CD4-positive, alpha-beta T cell (primary cell): ENCODE measurements at regions of chr1 and their contacts with region 1.

Region 1: DNA sequence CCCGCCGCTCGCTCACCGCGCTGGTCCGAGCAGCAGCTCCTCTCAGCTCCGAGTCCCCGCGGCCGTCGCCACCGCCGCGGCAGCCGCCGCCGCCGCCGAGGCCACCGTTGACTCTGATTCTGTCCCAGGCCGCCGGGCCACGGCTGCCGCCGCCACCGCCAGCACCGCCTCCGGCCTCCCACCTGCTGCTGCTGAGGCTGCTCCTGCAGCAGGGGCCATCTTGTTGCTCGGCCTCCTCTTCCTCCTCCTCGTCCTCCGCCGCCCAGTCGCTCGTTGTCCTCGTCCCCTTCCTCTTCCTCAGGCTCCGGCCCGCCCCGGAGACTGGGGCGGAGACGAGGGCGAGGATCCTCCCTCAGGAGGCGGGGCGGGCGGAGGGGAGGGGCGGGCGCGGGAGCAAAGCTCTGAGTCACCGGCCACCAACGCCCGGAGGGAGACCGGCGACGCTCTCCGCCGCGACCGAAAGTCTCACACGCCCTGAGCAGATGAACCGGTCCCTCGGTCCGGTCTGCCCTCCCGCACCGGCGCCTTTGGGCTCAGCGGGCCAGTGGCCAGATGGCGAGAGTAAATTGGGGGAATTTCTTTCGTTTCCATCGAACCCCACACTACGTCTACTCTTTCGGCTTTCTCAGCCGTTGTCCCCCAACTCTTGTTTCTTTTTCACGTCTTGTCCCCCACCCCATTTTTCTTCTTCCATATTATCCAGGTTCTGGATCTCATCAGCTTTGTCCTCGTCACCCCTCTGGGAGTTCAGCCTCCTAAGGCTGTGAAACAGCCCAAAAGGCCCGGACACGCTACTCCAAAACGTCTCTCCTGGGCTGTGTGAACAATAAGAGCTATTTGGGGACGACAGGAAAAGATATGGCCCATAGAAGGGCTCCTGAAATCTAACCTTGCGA is at the start of gene RC3H1:
- DNase-seq: peak; percentile 80 to 94 (median 88)
- ATAC-seq: peak; percentile 91
- H3K4me3 ChIP-seq: peak within 1 kb of the TSS; percentile 97
- H3K4me3 Mint-ChIP-seq: peak within 1 kb of the TSS; percentile 99
- H3K27ac ChIP-seq: peak within 1 kb of the TSS; percentile 85 to 90
- H3K27ac Mint-ChIP-seq: peak within 1 kb of the TSS; percentile 91
- H3K4me1 ChIP-seq: peaks cover 27% of the 10 kb centered on the region
- H3K4me1 Mint-ChIP-seq: peaks cover 55% of the 10 kb centered on the region
- H3K27me3 ChIP-seq: no peaks in the 10 kb centered on the region
- H3K27me3 Mint-ChIP-seq: no peaks in the 10 kb centered on the region
- CTCF ChIP-seq: no peak
- total RNA-seq, gene RC3H1: 38.0 to 40.4 TPM

Region 2: GRCh38 chr1:173714759-173715537 is 307.4 kb before region 1 on chr1 and contains the start of gene KLHL20:
- CTCF ChIA-PET with region 1: no interaction called
- POLR2A ChIA-PET with region 1: interaction called, 3 read pairs
- intact Hi-C with region 1: loop called in 1 of 2 experiments (anchors 10 kb)
- DNase-seq: peak; percentile 70 to 94 (median 81)
- ATAC-seq: peak; percentile 97
- H3K4me3 ChIP-seq: peak within 1 kb of the TSS; percentile 63
- H3K4me3 Mint-ChIP-seq: peak within 1 kb of the TSS; percentile 97
- H3K27ac ChIP-seq: peak within 1 kb of the TSS; percentile 73 to 81
- H3K27ac Mint-ChIP-seq: peak within 1 kb of the TSS; percentile 91
- H3K4me1 ChIP-seq: peaks cover 8% of the 10 kb centered on the region
- H3K4me1 Mint-ChIP-seq: peaks cover 36% of the 10 kb centered on the region
- H3K27me3 ChIP-seq: peaks cover 4 to 19% of the 10 kb centered on the region in 2 experiments
- H3K27me3 Mint-ChIP-seq: peaks cover 18% of the 10 kb centered on the region
- CTCF ChIP-seq: no peak
- total RNA-seq, gene KLHL20: 29.4 to 30.4 TPM

Region 3: GRCh38 chr1:173768206-173768605 is 254.1 kb before region 1 on chr1:
- CTCF ChIA-PET with region 1: no interaction called
- POLR2A ChIA-PET with region 1: no interaction called
- intact Hi-C with region 1: no loop called
- DNase-seq: no peak
- ATAC-seq: no peak
- H3K4me3 ChIP-seq: no peak overlapping the region
- H3K4me3 Mint-ChIP-seq: no peak overlapping the region
- H3K27ac ChIP-seq: no peak overlapping the region
- H3K27ac Mint-ChIP-seq: peak overlapping the region; percentile 57
- H3K4me1 ChIP-seq: no peaks in the 10 kb centered on the region
- H3K4me1 Mint-ChIP-seq: peaks cover 19% of the 10 kb centered on the region
- H3K27me3 ChIP-seq: no peaks in the 10 kb centered on the region
- H3K27me3 Mint-ChIP-seq: no peaks in the 10 kb centered on the region
- CTCF ChIP-seq: no peak

Region 4: GRCh38 chr1:173946380-173946921 is 75.9 kb before region 1 on chr1:
- CTCF ChIA-PET with region 1: no interaction called
- POLR2A ChIA-PET with region 1: no interaction called
- intact Hi-C with region 1: no loop called
- DNase-seq: no peak
- ATAC-seq: no peak
- H3K4me3 ChIP-seq: no peak overlapping the region
- H3K4me3 Mint-ChIP-seq: no peak overlapping the region
- H3K27ac ChIP-seq: no peak overlapping the region
- H3K27ac Mint-ChIP-seq: peak overlapping the region; percentile 53
- H3K4me1 ChIP-seq: no peaks in the 10 kb centered on the region
- H3K4me1 Mint-ChIP-seq: no peaks in the 10 kb centered on the region
- H3K27me3 ChIP-seq: no peaks in the 10 kb centered on the region
- H3K27me3 Mint-ChIP-seq: no peaks in the 10 kb centered on the region
- CTCF ChIP-seq: no peak

Region 5: DNA sequence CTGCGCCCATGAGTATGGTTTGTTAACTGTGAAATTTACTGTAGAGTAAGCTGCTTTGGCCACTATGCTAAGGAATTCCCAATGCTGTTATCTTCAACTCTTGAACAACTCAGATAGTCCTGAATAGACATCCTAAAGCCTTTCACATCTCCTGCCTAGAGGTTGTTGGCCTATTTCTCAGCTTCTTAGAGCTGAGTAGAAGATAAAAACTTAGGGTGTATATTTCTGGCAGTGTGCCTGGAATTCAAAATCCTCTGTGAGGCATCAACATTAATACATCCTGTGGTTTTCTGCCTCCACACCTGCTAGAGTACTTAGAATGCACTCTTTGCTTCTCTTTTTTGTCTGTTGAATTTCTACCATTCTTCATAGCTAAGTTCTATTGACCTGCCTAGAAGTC is 45.7 kb after region 1 on chr1:
- CTCF ChIA-PET with region 1: no interaction called
- POLR2A ChIA-PET with region 1: interaction called, 14 read pairs
- intact Hi-C with region 1: no loop called
- DNase-seq: peak in 4 of 14 experiments; percentile 11 to 41 (median 30)
- ATAC-seq: peak; percentile 69
- H3K4me3 ChIP-seq: no peak overlapping the region
- H3K4me3 Mint-ChIP-seq: no peak overlapping the region
- H3K27ac ChIP-seq: no peak overlapping the region
- H3K27ac Mint-ChIP-seq: peak overlapping the region; percentile 12
- H3K4me1 ChIP-seq: no peaks in the 10 kb centered on the region
- H3K4me1 Mint-ChIP-seq: peaks cover 13% of the 10 kb centered on the region
- H3K27me3 ChIP-seq: no peaks in the 10 kb centered on the region
- H3K27me3 Mint-ChIP-seq: no peaks in the 10 kb centered on the region
- CTCF ChIP-seq: no peak

Region 6: DNA sequence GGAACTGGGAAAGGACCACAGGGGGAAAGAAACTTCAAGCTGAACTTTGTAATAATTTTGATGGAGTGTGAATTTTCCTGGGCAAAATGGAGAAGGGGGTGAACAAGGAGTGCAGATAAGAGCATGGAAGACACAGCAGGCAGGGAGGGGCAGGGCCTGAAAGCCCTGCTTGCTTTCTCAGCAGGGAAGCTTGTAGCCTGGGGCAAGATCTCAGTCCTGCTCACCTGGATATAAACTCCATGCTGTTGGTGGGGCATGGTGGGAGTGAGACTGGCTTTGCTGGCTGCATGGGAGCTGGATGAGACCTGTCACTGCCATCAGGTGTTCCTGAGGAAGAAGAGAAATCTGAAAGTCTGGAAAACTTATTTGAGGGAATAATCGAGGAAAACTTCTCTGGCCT is 58.5 kb after region 1 on chr1:
- CTCF ChIA-PET with region 1: no interaction called
- POLR2A ChIA-PET with region 1: no interaction called
- intact Hi-C with region 1: no loop called
- DNase-seq: no peak
- ATAC-seq: no peak
- H3K4me3 ChIP-seq: no peak overlapping the region
- H3K4me3 Mint-ChIP-seq: no peak overlapping the region
- H3K27ac ChIP-seq: no peak overlapping the region
- H3K27ac Mint-ChIP-seq: no peak overlapping the region
- H3K4me1 ChIP-seq: no peaks in the 10 kb centered on the region
- H3K4me1 Mint-ChIP-seq: no peaks in the 10 kb centered on the region
- H3K27me3 ChIP-seq: no peaks in the 10 kb centered on the region
- H3K27me3 Mint-ChIP-seq: no peaks in the 10 kb centered on the region
- CTCF ChIP-seq: no peak

Region 7: DNA sequence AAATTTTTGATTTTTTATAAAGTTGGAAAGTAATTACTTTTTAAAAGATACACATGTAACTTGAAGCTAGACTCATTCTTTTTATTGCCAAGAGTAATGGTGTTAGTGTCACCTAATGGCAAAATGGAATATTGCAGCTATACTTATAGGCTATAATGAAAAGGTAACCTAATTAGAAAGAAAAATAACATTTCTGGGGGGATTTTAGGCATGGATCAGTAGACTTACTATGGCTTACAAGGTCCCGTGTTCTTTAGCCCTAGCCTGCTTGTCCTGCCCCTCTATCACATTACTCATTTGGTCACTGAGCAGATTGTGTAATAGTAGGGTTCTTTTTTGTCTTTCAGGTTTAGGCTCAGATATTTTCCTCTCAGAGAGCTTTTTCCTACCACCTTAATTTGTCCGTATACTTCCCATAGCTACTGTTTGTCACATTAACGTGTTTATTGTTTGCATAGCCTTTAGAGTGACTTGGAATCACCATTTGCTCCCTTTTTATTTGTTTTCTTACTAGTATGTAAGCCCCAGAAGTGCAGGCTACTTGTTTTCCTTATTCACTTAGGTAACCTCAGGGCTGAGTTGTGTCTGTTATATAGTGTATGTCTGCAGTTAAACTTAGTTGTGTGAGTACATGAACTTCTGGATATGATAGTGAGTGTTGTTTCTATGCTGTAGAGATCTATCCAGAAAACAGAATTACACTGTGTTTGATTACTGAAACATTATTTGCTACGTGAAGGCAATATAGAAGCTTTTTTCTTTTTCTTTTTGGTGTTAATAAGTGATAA is 195.7 kb after region 1 on chr1:
- CTCF ChIA-PET with region 1: interaction called, 3 read pairs
- POLR2A ChIA-PET with region 1: no interaction called
- intact Hi-C with region 1: loop called in 1 of 2 experiments (anchors 5 kb)
- DNase-seq: peak in 3 of 14 experiments; percentile 55 to 66 (median 65)
- ATAC-seq: peak; percentile 79
- H3K4me3 ChIP-seq: no peak overlapping the region
- H3K4me3 Mint-ChIP-seq: no peak overlapping the region
- H3K27ac ChIP-seq: no peak overlapping the region
- H3K27ac Mint-ChIP-seq: no peak overlapping the region
- H3K4me1 ChIP-seq: no peaks in the 10 kb centered on the region
- H3K4me1 Mint-ChIP-seq: no peaks in the 10 kb centered on the region
- H3K27me3 ChIP-seq: no peaks in the 10 kb centered on the region
- H3K27me3 Mint-ChIP-seq: no peaks in the 10 kb centered on the region
- CTCF ChIP-seq: peak; percentile 88

Region 8: GRCh38 chr1:174376030-174376429 is 353.7 kb after region 1 on chr1:
- CTCF ChIA-PET with region 1: no interaction called
- POLR2A ChIA-PET with region 1: no interaction called
- intact Hi-C with region 1: no loop called
- DNase-seq: no peak
- ATAC-seq: no peak
- H3K4me3 ChIP-seq: no peak overlapping the region
- H3K4me3 Mint-ChIP-seq: no peak overlapping the region
- H3K27ac ChIP-seq: no peak overlapping the region
- H3K27ac Mint-ChIP-seq: no peak overlapping the region
- H3K4me1 ChIP-seq: no peaks in the 10 kb centered on the region
- H3K4me1 Mint-ChIP-seq: no peaks in the 10 kb centered on the region
- H3K27me3 ChIP-seq: no peaks in the 10 kb centered on the region
- H3K27me3 Mint-ChIP-seq: no peaks in the 10 kb centered on the region
- CTCF ChIP-seq: no peak